CD8-positive, alpha-beta T cell (primary cell): ENCODE measurements at regions of chr18 and their contacts with region 1.

Region 1: GRCh38 chr18:5779922-5780321 is 115.4 kb downstream of the TMEM200C start:
- DNase-seq: no peak
- ATAC-seq: no peak
- H3K4me3 ChIP-seq: no peak overlapping the region
- H3K4me3 Mint-ChIP-seq: no peak overlapping the region
- H3K27ac ChIP-seq: no peak overlapping the region
- H3K27ac Mint-ChIP-seq: no peak overlapping the region
- H3K4me1 ChIP-seq: no peaks in the 10 kb centered on the region
- H3K4me1 Mint-ChIP-seq: no peaks in the 10 kb centered on the region
- H3K27me3 ChIP-seq: no peaks in the 10 kb centered on the region
- H3K27me3 Mint-ChIP-seq: no peaks in the 10 kb centered on the region
- CTCF ChIP-seq: no peak

Region 2: GRCh38 chr18:5817816-5818215 is 37.9 kb after region 1 on chr18:
- CTCF ChIA-PET with region 1: no interaction called
- POLR2A ChIA-PET with region 1: no interaction called
- intact Hi-C with region 1: no loop called
- DNase-seq: no peak
- ATAC-seq: no peak
- H3K4me3 ChIP-seq: no peak overlapping the region
- H3K4me3 Mint-ChIP-seq: no peak overlapping the region
- H3K27ac ChIP-seq: no peak overlapping the region
- H3K27ac Mint-ChIP-seq: no peak overlapping the region
- H3K4me1 ChIP-seq: no peaks in the 10 kb centered on the region
- H3K4me1 Mint-ChIP-seq: no peaks in the 10 kb centered on the region
- H3K27me3 ChIP-seq: no peaks in the 10 kb centered on the region
- H3K27me3 Mint-ChIP-seq: no peaks in the 10 kb centered on the region
- CTCF ChIP-seq: no peak

Region 3: GRCh38 chr18:5828913-5829312 is 49.0 kb after region 1 on chr18:
- CTCF ChIA-PET with region 1: no interaction called
- POLR2A ChIA-PET with region 1: no interaction called
- intact Hi-C with region 1: loop called in 1 of 2 experiments (anchors 5 kb)
- DNase-seq: no peak
- ATAC-seq: no peak
- H3K4me3 ChIP-seq: no peak overlapping the region
- H3K4me3 Mint-ChIP-seq: no peak overlapping the region
- H3K27ac ChIP-seq: no peak overlapping the region
- H3K27ac Mint-ChIP-seq: no peak overlapping the region
- H3K4me1 ChIP-seq: no peaks in the 10 kb centered on the region
- H3K4me1 Mint-ChIP-seq: no peaks in the 10 kb centered on the region
- H3K27me3 ChIP-seq: no peaks in the 10 kb centered on the region
- H3K27me3 Mint-ChIP-seq: no peaks in the 10 kb centered on the region
- CTCF ChIP-seq: no peak